Natural killer cell (primary cell): ENCODE measurements at regions of chr4 and their contacts with region 1.

Region 1: DNA sequence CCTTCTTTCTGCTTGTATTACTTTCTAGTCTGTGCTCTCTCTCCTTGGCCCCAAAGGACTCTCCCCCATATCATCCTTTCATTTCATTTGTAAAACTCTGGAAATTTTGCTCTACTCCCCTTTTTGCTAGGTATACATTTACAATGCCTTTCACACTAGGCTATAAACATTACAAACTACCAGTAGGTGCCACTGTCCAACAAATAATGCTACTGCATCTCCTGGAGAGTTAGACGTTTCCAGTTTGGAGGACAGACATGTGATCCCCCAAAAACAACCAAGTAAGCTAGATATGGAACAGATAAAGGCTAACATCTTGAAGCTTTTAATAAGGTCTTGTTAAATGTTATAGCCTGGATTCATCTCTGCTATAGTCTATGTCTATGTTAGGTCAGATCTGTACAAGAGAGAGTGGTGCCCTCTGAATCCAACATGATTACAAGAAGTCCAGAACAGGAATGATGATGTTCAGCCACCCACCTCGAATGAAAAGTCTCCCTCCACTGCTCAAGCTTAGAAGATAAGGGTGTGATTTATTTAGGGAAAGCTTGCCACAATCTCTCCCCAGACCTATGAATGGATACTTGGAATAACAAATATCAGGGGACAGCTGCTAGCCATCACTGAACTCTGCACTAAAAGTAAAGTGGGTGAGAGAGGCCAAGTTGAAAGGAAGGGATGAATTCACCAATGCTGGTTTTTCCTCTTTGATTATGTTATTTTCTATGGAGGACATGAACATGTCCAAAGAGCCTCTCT is 14.3 kb downstream of the CBR4 start:
- DNase-seq: peak in 1 of 2 donors; percentile 44
- ATAC-seq: peak in 2 of 3 donors; percentile 50 to 56
- H3K4me3 ChIP-seq: no peak overlapping the region
- H3K4me3 Mint-ChIP-seq: no peak overlapping the region
- H3K27ac ChIP-seq: no peak overlapping the region
- H3K27ac Mint-ChIP-seq: no peak overlapping the region
- H3K4me1 ChIP-seq: no peaks in the 10 kb centered on the region
- H3K4me1 Mint-ChIP-seq: peaks cover 10% of the 10 kb centered on the region in 2 donors
- H3K27me3 ChIP-seq: no peaks in the 10 kb centered on the region
- H3K27me3 Mint-ChIP-seq: no peaks in the 10 kb centered on the region
- CTCF ChIP-seq: peak; percentile 21

Region 2: GRCh38 chr4:169485791-169486742 is 490.4 kb after region 1 on chr4:
- intact Hi-C with region 1: loop called (anchors 1 kb)
- DNase-seq: peak in 1 of 2 donors; percentile 63
- ATAC-seq: peak in 2 of 3 donors; percentile 40 to 61
- H3K4me3 ChIP-seq: no peak overlapping the region
- H3K4me3 Mint-ChIP-seq: no peak overlapping the region
- H3K27ac ChIP-seq: no peak overlapping the region
- H3K27ac Mint-ChIP-seq: no peak overlapping the region
- H3K4me1 ChIP-seq: no peaks in the 10 kb centered on the region
- H3K4me1 Mint-ChIP-seq: peaks cover 0 to 4% of the 10 kb centered on the region in 2 donors
- H3K27me3 ChIP-seq: no peaks in the 10 kb centered on the region
- H3K27me3 Mint-ChIP-seq: no peaks in the 10 kb centered on the region
- CTCF ChIP-seq: peak; percentile 60

Region 3: GRCh38 chr4:169566021-169566818 is 570.5 kb after region 1 on chr4:
- intact Hi-C with region 1: loop called (anchors 10 kb)
- DNase-seq: peak in 1 of 2 donors; percentile 66
- ATAC-seq: peak; percentile 64 to 78 (median 76)
- H3K4me3 ChIP-seq: no peak overlapping the region
- H3K4me3 Mint-ChIP-seq: peak overlapping the region; percentile 13
- H3K27ac ChIP-seq: no peak overlapping the region
- H3K27ac Mint-ChIP-seq: no peak overlapping the region
- H3K4me1 ChIP-seq: no peaks in the 10 kb centered on the region
- H3K4me1 Mint-ChIP-seq: peaks cover 4 to 17% of the 10 kb centered on the region in 2 donors
- H3K27me3 ChIP-seq: no peaks in the 10 kb centered on the region
- H3K27me3 Mint-ChIP-seq: no peaks in the 10 kb centered on the region
- CTCF ChIP-seq: peak; percentile 66